Activated CD4-positive, alpha-beta memory T cell treated with anti-CD3 and anti-CD28 coated beads for 36 hours (primary cell): ENCODE measurements at regions of chr2 and their contacts with region 1.

Region 1: GRCh38 chr2:226649871-226650660 is 149.6 kb downstream of the IRS1 start:
- DNase-seq: peak; percentile 66
- H3K4me3 Mint-ChIP-seq: no peak overlapping the region
- H3K27ac Mint-ChIP-seq: peak overlapping the region; percentile 39
- H3K4me1 Mint-ChIP-seq: peaks cover 29% of the 10 kb centered on the region
- H3K27me3 Mint-ChIP-seq: no peaks in the 10 kb centered on the region

Region 2: GRCh38 chr2:226423498-226423960 is 226.5 kb before region 1 on chr2:
- CTCF ChIA-PET with region 1: no interaction called
- POLR2A ChIA-PET with region 1: no interaction called
- intact Hi-C with region 1: loop called (anchors 5 kb)
- DNase-seq: peak; percentile 66
- H3K4me3 Mint-ChIP-seq: peak overlapping the region; percentile 5
- H3K27ac Mint-ChIP-seq: no peak overlapping the region
- H3K4me1 Mint-ChIP-seq: peaks cover 15% of the 10 kb centered on the region
- H3K27me3 Mint-ChIP-seq: peaks cover 11% of the 10 kb centered on the region

Region 3: DNA sequence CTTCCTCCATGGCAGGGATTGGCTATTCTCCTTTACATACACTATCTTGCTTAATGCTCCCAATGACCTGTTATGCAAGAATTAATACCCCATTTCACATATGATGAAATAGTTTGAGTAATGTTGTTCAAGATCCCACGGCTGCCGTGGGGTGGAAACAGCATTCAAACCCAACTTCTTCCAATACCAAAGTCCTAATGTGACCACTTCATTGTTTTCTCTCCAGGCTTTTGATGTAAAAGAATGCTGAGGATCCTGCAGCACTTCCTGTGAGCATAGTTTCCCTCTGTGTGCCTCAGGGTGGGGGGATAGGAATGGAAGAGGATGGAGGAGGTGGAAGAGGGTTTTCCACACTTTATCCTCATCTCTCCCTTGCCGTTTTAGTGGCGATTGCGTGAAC is 49.9 kb before region 1 on chr2:
- CTCF ChIA-PET with region 1: no interaction called
- POLR2A ChIA-PET with region 1: no interaction called
- intact Hi-C with region 1: no loop called
- DNase-seq: no peak
- H3K4me3 Mint-ChIP-seq: no peak overlapping the region
- H3K27ac Mint-ChIP-seq: no peak overlapping the region
- H3K4me1 Mint-ChIP-seq: no peaks in the 10 kb centered on the region
- H3K27me3 Mint-ChIP-seq: peaks cover 16% of the 10 kb centered on the region

Region 4: DNA sequence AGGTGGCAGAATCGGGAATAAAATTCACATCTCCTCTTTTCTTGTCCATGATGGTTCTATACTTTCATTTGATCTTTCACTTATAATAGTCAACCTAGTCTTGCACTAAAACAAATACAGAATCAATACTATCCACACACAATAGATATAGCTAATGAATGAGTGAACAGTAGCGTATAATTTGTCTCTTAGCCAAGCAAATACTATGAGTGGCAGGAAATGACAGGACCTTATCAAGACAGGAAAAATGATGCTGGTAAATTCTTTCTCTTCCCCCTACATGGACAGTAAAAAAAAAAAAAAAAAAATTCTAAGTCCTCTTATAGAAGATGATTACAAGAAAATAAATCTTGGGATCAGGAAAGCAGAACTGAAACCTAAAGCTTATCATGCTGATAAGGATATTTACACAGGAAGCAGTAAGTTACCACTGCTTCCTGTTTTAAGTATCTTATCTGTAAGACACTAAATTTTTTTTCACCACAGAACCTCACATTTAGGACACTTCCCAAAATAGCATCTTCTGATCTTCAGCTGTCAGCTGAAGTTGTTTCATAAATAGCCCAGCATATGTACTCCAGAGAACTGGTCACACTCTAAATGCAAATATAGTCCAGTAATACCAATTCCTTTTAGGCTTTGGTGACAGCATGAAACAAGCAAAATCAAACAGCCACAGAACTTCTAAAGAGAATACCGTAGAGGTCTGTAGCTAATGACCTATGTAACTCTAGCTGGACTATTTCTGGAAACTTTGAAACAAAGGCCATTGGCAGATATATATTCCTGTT is 122.5 kb after region 1 on chr2:
- CTCF ChIA-PET with region 1: no interaction called
- POLR2A ChIA-PET with region 1: no interaction called
- intact Hi-C with region 1: loop called (anchors 5 kb)
- DNase-seq: no peak
- H3K4me3 Mint-ChIP-seq: no peak overlapping the region
- H3K27ac Mint-ChIP-seq: no peak overlapping the region
- H3K4me1 Mint-ChIP-seq: peaks cover 16% of the 10 kb centered on the region
- H3K27me3 Mint-ChIP-seq: no peaks in the 10 kb centered on the region